ENCODE measurements at regions of chr16 and their contacts with region 1.

Region 1: GRCh38 chr16:1705688-1706385 is at the start of gene MAPK8IP3:
- DNase-seq: peak; percentile 100
- ATAC-seq: peak; percentile 78
- H3K4me3 Mint-ChIP-seq: peak within 1 kb of the TSS; percentile 98
- H3K27ac Mint-ChIP-seq: peak within 1 kb of the TSS; percentile 98
- H3K4me1 Mint-ChIP-seq: peaks cover 23% of the 10 kb centered on the region
- H3K27me3 Mint-ChIP-seq: no peaks in the 10 kb centered on the region
- total RNA-seq, gene MAPK8IP3: 146 to 157 TPM

Region 2: GRCh38 chr16:1420111-1420540 is 285.7 kb before region 1 on chr16:
- POLR2A ChIA-PET with region 1: interaction called, 14 read pairs
- DNase-seq: no peak
- ATAC-seq: peak; percentile 0
- H3K4me3 Mint-ChIP-seq: peak overlapping the region; percentile 86
- H3K27ac Mint-ChIP-seq: peak overlapping the region; percentile 98
- H3K4me1 Mint-ChIP-seq: peaks cover 15% of the 10 kb centered on the region
- H3K27me3 Mint-ChIP-seq: no peaks in the 10 kb centered on the region

Region 3: DNA sequence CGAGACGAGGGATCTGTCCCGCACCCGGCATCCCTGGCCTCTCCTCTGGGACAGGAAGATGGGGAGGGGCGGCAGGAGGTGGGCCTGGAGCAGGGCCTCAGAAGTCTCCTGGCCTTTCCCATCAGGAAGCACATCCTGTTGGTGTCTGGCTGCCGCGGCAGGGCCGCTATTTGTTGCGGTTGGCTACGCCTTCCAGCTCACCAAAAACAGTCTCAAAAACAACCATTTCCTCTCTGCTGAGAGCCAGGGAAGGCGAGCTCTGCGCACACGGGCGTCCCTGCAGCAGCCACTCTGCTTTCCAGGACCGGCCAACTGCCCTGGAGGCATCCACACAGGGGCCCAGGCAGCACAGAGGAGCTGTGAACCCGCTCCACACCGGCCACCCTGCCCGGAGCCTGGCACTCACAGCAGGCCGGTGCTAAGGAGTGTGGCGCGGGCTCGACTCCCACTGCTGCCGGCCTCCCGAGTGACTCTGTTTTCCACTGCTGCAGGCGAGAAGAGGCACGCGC is 172.3 kb before region 1 on chr16 and contains the start of gene TMEM204:
- POLR2A ChIA-PET with region 1: interaction called, 10 read pairs
- DNase-seq: peak; percentile 72
- ATAC-seq: peak; percentile 47
- H3K4me3 Mint-ChIP-seq: peak within 1 kb of the TSS; percentile 97
- H3K27ac Mint-ChIP-seq: peak within 1 kb of the TSS; percentile 93
- H3K4me1 Mint-ChIP-seq: peaks cover 37% of the 10 kb centered on the region
- H3K27me3 Mint-ChIP-seq: no peaks in the 10 kb centered on the region
- total RNA-seq, gene TMEM204: 68.3 to 72.0 TPM

Region 4: GRCh38 chr16:1610276-1611017 is 95.4 kb before region 1 on chr16:
- POLR2A ChIA-PET with region 1: interaction called, 12 read pairs
- DNase-seq: peak; percentile 95
- ATAC-seq: peak; percentile 48
- H3K4me3 Mint-ChIP-seq: peak overlapping the region; percentile 88
- H3K27ac Mint-ChIP-seq: peak overlapping the region; percentile 96
- H3K4me1 Mint-ChIP-seq: peaks cover 11% of the 10 kb centered on the region
- H3K27me3 Mint-ChIP-seq: no peaks in the 10 kb centered on the region

Region 5: DNA sequence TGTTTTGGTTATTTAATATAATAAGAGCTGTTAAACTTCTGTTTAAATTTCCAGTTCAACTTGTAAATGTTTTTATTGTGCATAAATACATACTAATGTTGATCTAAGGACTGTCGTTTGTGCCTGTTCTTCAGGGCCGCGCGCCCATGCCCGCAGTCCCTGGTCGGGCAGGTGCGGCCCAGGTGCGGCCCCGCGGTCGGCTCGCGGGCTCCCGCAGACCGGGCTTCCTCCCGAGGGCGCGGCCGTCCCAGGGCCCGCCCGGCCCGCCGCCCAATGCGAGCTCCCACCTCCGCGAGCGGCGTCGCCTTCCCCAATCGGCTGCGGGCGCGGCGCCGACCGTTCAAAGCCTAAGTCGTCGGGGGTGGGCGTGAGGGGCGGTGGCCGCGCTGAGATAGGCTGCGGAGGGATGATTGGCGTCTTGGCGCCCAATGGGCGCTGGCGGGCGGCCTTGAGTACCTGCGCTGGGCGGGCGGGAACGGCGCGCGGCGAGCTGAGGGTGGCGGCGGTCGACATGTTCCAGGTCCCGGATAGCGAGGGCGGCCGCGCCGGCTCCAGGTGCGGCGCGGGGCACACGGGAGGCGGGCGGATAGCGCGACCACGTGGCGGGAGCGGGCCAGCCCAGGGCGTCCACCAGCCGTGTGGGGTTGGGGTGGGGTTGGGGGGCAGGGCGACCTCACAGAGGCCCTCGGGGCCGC is 27.9 kb before region 1 on chr16 and contains the start of gene JPT2:
- POLR2A ChIA-PET with region 1: interaction called, 26 read pairs
- DNase-seq: peak; percentile 96
- ATAC-seq: peak; percentile 99
- H3K4me3 Mint-ChIP-seq: peak within 1 kb of the TSS; percentile 96
- H3K27ac Mint-ChIP-seq: peak within 1 kb of the TSS; percentile 89
- H3K4me1 Mint-ChIP-seq: peaks cover 20% of the 10 kb centered on the region
- H3K27me3 Mint-ChIP-seq: no peaks in the 10 kb centered on the region
- total RNA-seq, gene JPT2: 44.7 to 45.1 TPM

Region 6: GRCh38 chr16:1762196-1762878 is 56.5 kb after region 1 on chr16:
- POLR2A ChIA-PET with region 1: no interaction called
- DNase-seq: no peak
- ATAC-seq: no peak
- H3K4me3 Mint-ChIP-seq: no peak overlapping the region
- H3K27ac Mint-ChIP-seq: no peak overlapping the region
- H3K4me1 Mint-ChIP-seq: peaks cover 4% of the 10 kb centered on the region
- H3K27me3 Mint-ChIP-seq: no peaks in the 10 kb centered on the region

Region 7: GRCh38 chr16:1772736-1773584 is 67.1 kb after region 1 on chr16 and contains the starts of genes EME2 and MRPS34:
- POLR2A ChIA-PET with region 1: interaction called, 12 read pairs
- DNase-seq: peak; percentile 90
- ATAC-seq: peak; percentile 48
- H3K4me3 Mint-ChIP-seq: peak within 1 kb of the TSS; percentile 99
- H3K27ac Mint-ChIP-seq: peak within 1 kb of the TSS; percentile 98
- H3K4me1 Mint-ChIP-seq: peaks cover 4% of the 10 kb centered on the region
- H3K27me3 Mint-ChIP-seq: no peaks in the 10 kb centered on the region
- total RNA-seq, gene EME2: 28.7 to 36.3 TPM
- total RNA-seq, gene MRPS34: 91.6 to 103 TPM

Region 8: DNA sequence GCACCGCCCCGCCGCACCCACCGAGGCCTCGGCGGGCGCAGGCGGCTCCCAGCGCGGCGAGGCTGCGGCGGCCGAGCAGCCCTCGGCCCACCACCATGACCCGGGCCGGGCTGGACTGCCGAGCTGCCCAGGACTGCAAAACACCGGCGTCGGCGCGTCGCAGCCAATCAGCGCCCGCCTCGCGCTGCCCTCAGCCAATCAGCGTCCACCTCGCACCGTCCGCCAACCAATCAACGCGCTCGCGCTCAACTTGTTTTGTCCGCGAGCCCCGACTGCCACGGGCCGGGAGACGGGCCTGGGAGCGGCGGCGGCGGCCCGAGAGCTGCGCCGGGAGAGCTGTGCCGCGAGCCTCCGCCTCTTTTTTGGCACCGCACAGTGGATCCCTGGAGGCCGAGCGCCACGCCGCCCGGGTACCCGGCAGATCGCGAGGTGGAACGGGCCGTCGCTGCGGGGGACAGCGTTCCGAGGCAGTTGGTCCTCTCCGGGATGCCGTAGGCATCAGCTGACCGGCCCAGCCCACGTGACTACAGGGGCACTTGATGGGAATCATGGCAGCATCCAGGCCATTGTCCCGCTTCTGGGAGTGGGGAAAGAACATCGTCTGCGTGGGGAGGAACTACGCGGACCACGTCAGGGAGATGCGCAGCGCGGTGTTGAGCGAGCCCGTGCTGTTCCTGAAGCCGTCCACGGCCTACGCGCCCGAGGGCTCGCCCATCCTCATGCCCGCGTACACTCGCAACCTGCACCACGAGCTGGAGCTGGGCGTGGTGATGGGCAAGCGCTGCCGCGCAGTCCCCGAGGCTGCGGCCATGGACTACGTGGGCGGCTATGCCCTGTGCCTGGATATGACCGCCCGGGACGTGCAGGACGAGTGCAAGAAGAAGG is 121.1 kb after region 1 on chr16 and contains the starts of genes FAHD1 and HAGH:
- POLR2A ChIA-PET with region 1: interaction called, 10 read pairs
- DNase-seq: peak; percentile 95
- ATAC-seq: peak; percentile 87
- H3K4me3 Mint-ChIP-seq: peak within 1 kb of the TSS; percentile 94
- H3K27ac Mint-ChIP-seq: peak within 1 kb of the TSS; percentile 88
- H3K4me1 Mint-ChIP-seq: peaks cover 18% of the 10 kb centered on the region
- H3K27me3 Mint-ChIP-seq: no peaks in the 10 kb centered on the region
- total RNA-seq, gene FAHD1: 12.0 to 12.2 TPM
- total RNA-seq, gene HAGH: 48.7 to 51.6 TPM